Panc1 (cell line): ENCODE measurements at regions of chr12 and their contacts with region 1.

Region 1: GRCh38 chr12:111812881-111813741 is 28.9 kb upstream of the MAPKAPK5 start:
- DNase-seq: peak; percentile 50
- ATAC-seq: peak; percentile 96
- H3K4me3 ChIP-seq: no peak overlapping the region
- H3K27ac ChIP-seq: no peak overlapping the region
- H3K4me1 ChIP-seq: no peaks in the 10 kb centered on the region
- H3K27me3 ChIP-seq: no peaks in the 10 kb centered on the region
- CTCF ChIP-seq: peak; percentile 92

Region 2: DNA sequence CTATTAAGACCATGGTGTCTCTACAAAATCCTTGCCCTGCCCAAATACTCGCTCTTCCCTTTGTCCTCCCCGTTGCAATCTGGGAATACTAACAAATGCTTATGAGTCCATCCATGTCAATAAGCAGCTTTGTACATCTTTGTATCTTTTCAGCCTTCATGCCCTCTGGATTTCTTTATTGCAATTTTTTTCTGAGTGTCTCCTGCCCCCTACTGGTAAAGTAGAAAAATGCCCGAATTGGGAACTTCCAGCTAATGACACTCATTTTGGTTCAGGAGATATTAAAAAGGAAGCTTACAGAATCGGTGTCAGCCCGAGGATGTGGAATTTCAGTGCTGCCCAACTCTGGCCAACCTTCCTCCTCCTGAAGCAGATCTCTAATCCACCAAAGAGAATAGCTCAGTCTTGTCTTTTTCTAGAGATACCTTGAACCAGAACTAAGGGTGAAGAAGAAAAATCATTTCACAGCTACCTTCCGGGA is 361.4 kb before region 1 on chr12:
- CTCF ChIA-PET with region 1: interaction called, 12 read pairs
- POLR2A ChIA-PET with region 1: no interaction called
- in situ Hi-C with region 1: no loop called
- intact Hi-C with region 1: no loop called
- DNase-seq: peak; percentile 35
- ATAC-seq: no peak
- H3K4me3 ChIP-seq: no peak overlapping the region
- H3K27ac ChIP-seq: no peak overlapping the region
- H3K4me1 ChIP-seq: peaks cover 25% of the 10 kb centered on the region
- H3K27me3 ChIP-seq: no peaks in the 10 kb centered on the region
- CTCF ChIP-seq: peak; percentile 84

Region 3: DNA sequence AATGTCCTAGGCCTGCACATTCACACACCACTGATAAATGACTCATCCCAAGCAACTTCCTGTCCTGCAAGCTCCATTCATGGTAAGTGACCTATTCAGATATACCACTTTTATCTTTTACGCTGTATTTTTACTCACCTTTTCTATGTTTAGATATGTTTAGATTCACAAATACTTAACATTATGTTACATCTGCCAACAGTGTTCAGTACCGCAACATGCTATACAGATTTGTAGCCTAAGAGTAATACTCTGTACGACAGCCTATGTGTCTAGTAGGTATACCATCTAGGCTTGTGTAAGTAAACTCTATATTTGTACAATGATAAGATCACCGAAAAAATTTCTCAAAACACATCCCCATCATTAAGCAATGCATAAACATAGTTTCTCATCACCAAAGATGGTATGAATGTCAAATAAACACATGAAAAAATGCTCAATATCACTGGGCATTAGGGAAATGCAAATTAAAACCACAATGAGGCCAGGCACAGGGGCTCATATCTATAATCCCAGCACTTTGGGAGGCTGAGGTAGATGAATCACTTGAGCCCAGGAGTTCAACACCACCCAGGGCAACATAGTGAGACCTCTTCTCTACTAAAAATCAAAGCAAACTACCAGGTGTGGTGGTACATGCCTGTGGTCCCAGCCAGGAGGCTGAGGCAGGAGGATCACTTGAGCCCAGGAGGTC is 234.7 kb before region 1 on chr12:
- CTCF ChIA-PET with region 1: no interaction called
- POLR2A ChIA-PET with region 1: no interaction called
- in situ Hi-C with region 1: no loop called
- intact Hi-C with region 1: no loop called
- DNase-seq: peak; percentile 61
- ATAC-seq: peak; percentile 84
- H3K4me3 ChIP-seq: no peak overlapping the region
- H3K27ac ChIP-seq: peak overlapping the region; percentile 18; the same call in 1 of the 2 replicates
- H3K4me1 ChIP-seq: peaks cover 23% of the 10 kb centered on the region
- H3K27me3 ChIP-seq: no peaks in the 10 kb centered on the region
- CTCF ChIP-seq: no peak

Region 4: GRCh38 chr12:111599459-111600204 is 213.5 kb before region 1 on chr12:
- CTCF ChIA-PET with region 1: no interaction called
- POLR2A ChIA-PET with region 1: no interaction called
- in situ Hi-C with region 1: no loop called
- intact Hi-C with region 1: no loop called
- DNase-seq: peak; percentile 36
- ATAC-seq: peak; percentile 88
- H3K4me3 ChIP-seq: peak overlapping the region; percentile 78 to 91
- H3K27ac ChIP-seq: peak overlapping the region; percentile 98
- H3K4me1 ChIP-seq: peaks cover 13% of the 10 kb centered on the region
- H3K27me3 ChIP-seq: no peaks in the 10 kb centered on the region
- CTCF ChIP-seq: no peak

Region 5: DNA sequence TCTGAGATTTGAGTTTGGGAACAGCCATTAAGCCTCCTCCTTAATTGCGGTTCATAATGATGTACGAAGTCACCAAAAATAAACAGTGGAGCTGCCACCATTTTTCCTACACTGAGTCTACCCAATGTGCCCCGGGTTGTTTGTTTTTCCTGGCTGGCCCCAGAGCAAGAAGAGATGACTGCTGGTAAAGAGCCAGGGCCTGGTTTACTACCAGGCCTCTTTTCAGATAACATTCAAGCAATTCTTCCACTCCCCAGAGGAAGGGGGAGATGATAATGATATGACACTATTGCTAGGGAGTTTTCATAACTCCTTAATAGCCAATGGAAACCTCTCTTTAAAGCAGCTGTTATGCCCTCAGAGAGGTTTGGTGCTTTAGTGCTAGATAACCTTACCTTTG is 169.7 kb before region 1 on chr12:
- CTCF ChIA-PET with region 1: no interaction called
- POLR2A ChIA-PET with region 1: no interaction called
- in situ Hi-C with region 1: no loop called
- intact Hi-C with region 1: no loop called
- DNase-seq: no peak
- ATAC-seq: peak; percentile 41; the same call in 1 of the 2 replicates
- H3K4me3 ChIP-seq: no peak overlapping the region
- H3K27ac ChIP-seq: no peak overlapping the region
- H3K4me1 ChIP-seq: peaks cover 4% of the 10 kb centered on the region; the same call in 1 of the 2 replicates
- H3K27me3 ChIP-seq: no peaks in the 10 kb centered on the region
- CTCF ChIP-seq: no peak

Region 6: GRCh38 chr12:111753144-111753881 is 59.8 kb before region 1 on chr12:
- CTCF ChIA-PET with region 1: interaction called, 17 read pairs
- POLR2A ChIA-PET with region 1: no interaction called
- in situ Hi-C with region 1: no loop called
- intact Hi-C with region 1: loop called (anchors 1 kb)
- DNase-seq: no peak
- ATAC-seq: peak; percentile 94
- H3K4me3 ChIP-seq: no peak overlapping the region
- H3K27ac ChIP-seq: no peak overlapping the region
- H3K4me1 ChIP-seq: no peaks in the 10 kb centered on the region
- H3K27me3 ChIP-seq: no peaks in the 10 kb centered on the region
- CTCF ChIP-seq: peak; percentile 90; the same call in 1 of the 2 replicates

Region 7: GRCh38 chr12:111904446-111904975 is 91.4 kb after region 1 on chr12:
- CTCF ChIA-PET with region 1: no interaction called
- POLR2A ChIA-PET with region 1: no interaction called
- in situ Hi-C with region 1: no loop called
- intact Hi-C with region 1: no loop called
- DNase-seq: no peak
- ATAC-seq: no peak
- H3K4me3 ChIP-seq: no peak overlapping the region
- H3K27ac ChIP-seq: no peak overlapping the region
- H3K4me1 ChIP-seq: no peaks in the 10 kb centered on the region
- H3K27me3 ChIP-seq: no peaks in the 10 kb centered on the region
- CTCF ChIP-seq: no peak